H1 (cell line): ENCODE measurements at regions of chr15 and their contacts with region 1.

Region 1: DNA sequence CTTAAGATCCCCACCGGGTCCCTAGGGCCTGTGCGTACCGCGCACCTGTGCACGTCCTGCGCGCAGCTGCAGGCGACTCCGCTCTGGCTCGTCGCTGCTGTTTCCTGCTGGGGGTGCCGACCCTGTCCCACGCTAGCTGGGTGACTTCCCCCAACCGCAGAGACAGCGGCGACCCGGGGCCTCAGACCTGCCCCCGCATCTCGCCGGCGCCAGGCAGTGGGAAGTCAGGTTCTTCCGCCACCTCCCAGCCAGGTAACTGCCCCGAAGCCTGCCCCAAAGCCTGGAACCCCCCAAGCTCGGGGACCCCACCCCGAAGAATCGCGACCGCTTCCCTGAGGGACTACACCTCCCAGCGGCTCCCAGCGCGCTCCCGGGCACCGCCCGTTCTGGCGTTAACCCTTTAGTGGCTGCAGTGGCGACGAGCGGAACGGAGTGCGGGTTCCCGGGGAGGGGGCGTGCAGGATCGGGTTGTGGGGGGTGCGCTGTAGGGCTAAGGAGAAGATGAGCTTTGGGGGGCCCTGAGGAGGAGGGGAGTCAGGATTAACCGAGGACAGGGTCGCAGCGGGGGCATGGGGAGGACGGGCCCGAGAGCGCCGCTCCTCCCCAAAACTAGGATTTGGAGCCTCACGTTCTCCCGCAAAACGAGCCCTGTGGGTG is 511 bp downstream of the NEIL1 start:
- DNase-seq: peak in 1 of 2 experiments; percentile 87
- H3K4me3 ChIP-seq: peak overlapping the region; percentile 63 to 87 (median 76)
- H3K27ac ChIP-seq: no peak overlapping the region
- H3K4me1 ChIP-seq: peaks cover 0 to 9% (median 5%) of the 10 kb centered on the region in 4 experiments; a peak in 4 of 7 replicates
- H3K27me3 ChIP-seq: peaks cover 0 to 31% (median 16%) of the 10 kb centered on the region in 4 experiments; a peak in 5 of 7 replicates
- CTCF ChIP-seq: no peak
- EP300 ChIP-seq: no peak
- POLR2A ChIP-seq: no peak
- RAD21 ChIP-seq: no peak

Region 2: GRCh38 chr15:75130597-75131268 is 216.6 kb before region 1 on chr15:
- CTCF ChIA-PET with region 1: no interaction called
- POLR2A ChIA-PET with region 1: no interaction called
- DNase-seq: no peak
- H3K4me3 ChIP-seq: no peak overlapping the region
- H3K27ac ChIP-seq: no peak overlapping the region
- H3K4me1 ChIP-seq: no peaks in the 10 kb centered on the region
- H3K27me3 ChIP-seq: no peaks in the 10 kb centered on the region
- CTCF ChIP-seq: no peak
- EP300 ChIP-seq: no peak
- POLR2A ChIP-seq: no peak
- RAD21 ChIP-seq: no peak

Region 3: DNA sequence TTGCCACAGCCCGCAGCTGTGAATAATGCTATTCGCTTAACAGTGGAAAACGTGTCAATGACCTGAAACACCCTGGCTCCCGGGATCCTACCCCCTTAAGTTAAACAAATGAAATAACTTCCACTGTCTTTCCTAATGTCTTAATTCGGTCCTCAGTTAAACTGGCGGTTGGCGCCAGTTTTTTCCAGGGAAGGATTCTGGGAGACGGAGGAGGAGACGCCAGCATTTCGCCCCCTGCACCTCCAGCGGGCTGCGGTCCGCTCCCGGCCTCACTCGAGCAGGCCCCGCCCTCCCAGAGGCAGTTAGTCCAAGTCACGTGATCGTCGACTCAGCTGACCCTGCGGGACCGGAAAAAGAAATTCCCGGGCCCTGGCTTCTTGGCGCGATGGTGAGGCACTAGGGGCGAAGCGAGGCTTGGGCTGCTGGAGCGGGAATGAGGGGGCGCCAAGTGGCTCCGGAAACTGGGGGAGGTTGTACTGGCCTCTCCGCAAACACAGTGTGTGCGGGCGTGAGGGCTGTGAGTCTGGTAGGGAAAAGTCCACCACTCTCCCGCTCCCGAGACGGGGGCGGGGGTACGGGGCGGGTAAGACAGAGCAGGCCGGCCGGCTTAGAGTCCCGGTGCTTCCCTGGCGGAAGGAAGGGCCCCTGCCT is 11.5 kb before region 1 on chr15 and contains the start of gene COMMD4:
- CTCF ChIA-PET with region 1: interaction called, 3 read pairs
- POLR2A ChIA-PET with region 1: interaction called, 10 read pairs
- DNase-seq: peak; percentile 75 to 95
- H3K4me3 ChIP-seq: peak within 1 kb of the TSS; percentile 50 to 91 (median 86)
- H3K27ac ChIP-seq: peak within 1 kb of the TSS; percentile 75; the same call in 1 of the 2 replicates
- H3K4me1 ChIP-seq: peaks cover 0 to 7% (median 2%) of the 10 kb centered on the region in 4 experiments; a peak in 5 of 7 replicates
- H3K27me3 ChIP-seq: no peaks in the 10 kb centered on the region; a peak in 1 of 7 replicates
- CTCF ChIP-seq: no peak
- EP300 ChIP-seq: peak in 1 of 2 experiments; percentile 79; a peak in 1 of 3 replicates
- POLR2A ChIP-seq: peak; percentile 28 to 80
- RAD21 ChIP-seq: no peak
- total RNA-seq, gene COMMD4: 131 and 132 TPM in 2 replicates

Region 4: DNA sequence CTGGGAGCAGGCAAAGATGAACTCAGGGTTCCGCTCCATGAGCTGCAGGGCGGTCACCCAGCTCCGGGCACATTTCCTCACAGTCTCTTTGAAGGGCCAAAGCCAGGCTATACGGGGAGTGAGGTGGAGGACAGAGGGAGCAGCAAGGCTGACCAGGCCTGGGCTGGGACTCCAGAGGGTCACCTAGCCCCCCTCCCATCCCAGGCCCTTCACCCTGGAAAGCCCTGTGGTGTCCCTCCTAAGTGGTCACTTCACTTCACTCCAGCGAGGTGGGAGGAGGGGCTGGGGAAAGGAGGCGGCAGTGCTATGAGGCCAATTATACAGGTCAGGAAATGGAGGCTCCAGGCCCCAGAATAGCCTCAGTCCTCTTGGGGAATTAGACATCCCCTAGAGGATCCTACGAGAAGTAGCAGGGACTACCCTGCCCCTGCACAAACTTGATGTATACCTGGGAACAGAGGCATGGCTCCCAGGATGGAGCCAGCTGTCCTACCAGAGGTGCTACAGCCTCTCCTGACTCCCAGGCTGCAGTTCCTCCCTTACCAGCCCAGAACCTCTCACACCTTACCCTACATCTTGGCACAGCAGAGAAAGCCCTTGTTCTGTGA is 15.4 kb after region 1 on chr15:
- CTCF ChIA-PET with region 1: interaction called, 6 read pairs
- POLR2A ChIA-PET with region 1: interaction called, 69 read pairs
- DNase-seq: no peak
- H3K4me3 ChIP-seq: no peak overlapping the region
- H3K27ac ChIP-seq: no peak overlapping the region
- H3K4me1 ChIP-seq: peaks cover 0 to 4% (median 1%) of the 10 kb centered on the region in 4 experiments; a peak in 3 of 7 replicates
- H3K27me3 ChIP-seq: no peaks in the 10 kb centered on the region
- CTCF ChIP-seq: peak in 2 of 3 experiments; percentile 6 to 44; a peak in 2 of 4 replicates
- EP300 ChIP-seq: no peak
- POLR2A ChIP-seq: 0 out of 3 replicates have a peak, but pooled peaks of 1 of the 2 experiments have one; percentile 37
- RAD21 ChIP-seq: 0 out of 4 replicates have a peak, but pooled peaks of 1 of the 2 experiments have one; percentile 1

Region 5: DNA sequence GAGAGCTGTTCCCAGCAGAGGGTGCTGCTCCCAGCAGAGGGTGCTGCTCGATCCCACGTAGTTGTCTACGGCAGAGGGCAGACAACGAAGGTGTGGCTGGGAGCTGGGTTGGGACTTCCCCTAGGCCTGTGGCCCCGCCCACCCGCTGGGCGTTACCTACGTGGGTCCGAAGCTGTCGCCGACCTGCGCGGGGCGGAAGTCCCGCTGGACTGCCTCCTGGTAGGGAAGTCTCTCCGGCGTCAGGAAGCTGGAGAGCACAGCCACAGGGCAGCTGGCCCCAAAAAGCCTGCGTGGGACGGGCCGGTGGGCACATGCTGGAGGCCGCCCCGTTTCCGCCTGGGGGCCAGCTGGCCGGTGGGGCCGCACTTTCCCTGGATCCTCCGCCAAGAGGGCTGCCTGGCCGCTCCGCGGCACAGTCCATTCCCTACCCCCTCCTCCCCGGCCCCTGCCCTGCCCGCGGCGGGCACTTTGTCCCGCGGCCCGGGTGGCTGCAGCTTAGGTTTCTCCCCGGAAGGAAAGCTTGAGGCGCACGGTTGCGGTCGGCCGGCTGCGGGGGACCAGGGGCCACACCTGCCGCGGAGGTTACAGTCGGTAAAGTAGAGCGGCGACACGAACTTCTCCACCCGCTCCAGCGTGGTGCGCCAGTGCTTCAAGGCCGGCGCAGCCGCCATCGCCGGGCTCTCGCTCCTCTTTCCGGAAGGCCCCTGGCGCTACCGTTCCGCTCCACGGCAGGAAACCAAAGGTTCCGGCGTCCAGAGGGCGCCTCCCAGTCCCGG is 20.8 kb after region 1 on chr15 and contains the start of gene MAN2C1:
- CTCF ChIA-PET with region 1: interaction called, 6 read pairs
- POLR2A ChIA-PET with region 1: interaction called, 69 read pairs
- DNase-seq: peak; percentile 94 to 96
- H3K4me3 ChIP-seq: peak within 1 kb of the TSS; percentile 59 to 85 (median 72)
- H3K27ac ChIP-seq: peak within 1 kb of the TSS; percentile 74
- H3K4me1 ChIP-seq: peaks cover 0 to 4% (median 1%) of the 10 kb centered on the region in 4 experiments; a peak in 4 of 7 replicates
- H3K27me3 ChIP-seq: no peaks in the 10 kb centered on the region
- CTCF ChIP-seq: peak; percentile 91 to 96 (median 93)
- EP300 ChIP-seq: peak; percentile 9 to 76; a peak in 2 of 3 replicates
- POLR2A ChIP-seq: peak; percentile 95 to 96
- RAD21 ChIP-seq: peak; percentile 52 to 65
- total RNA-seq, gene MAN2C1: 79.1 and 88.9 TPM in 2 replicates

Region 6: DNA sequence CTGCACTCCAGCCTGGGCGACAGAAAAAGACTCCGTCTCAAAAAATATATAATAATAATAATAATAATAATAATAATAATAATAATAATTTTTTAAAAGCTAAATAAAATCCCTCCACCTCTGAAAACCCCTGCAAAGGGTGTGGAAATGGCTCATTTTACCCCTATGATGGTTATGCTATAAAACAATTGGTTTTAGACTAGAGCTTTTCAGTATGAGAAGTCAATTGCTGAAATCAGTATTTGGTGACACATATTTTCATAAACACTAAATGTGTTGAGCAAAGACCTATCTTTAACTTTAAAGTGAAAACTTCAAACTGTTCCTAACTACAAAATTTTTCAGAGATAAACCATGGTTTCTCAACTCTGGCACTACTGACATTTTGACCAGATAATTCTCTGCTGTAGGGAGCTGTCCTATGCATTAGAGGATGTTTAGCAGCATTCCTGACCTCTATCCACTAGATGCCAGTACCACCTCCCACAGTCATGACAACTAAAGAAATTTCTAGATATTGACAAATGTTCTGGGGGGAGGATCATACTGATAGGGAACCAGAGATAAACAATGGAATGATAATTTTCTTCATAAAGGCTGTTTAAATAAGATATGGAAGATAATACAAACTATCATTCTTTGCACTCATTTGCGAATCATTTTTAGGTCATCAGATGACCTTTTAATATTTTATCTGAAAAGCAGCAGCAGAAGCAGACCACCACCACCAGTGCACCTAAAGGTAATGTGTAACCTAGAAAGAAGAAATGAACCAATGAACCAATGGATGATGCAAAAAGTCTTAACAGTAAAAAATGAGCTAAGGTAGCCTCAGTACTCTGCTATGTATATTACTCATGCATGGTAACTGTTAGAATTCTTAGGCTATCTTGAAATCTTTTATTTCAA is 218.0 kb after region 1 on chr15:
- CTCF ChIA-PET with region 1: no interaction called
- POLR2A ChIA-PET with region 1: no interaction called
- DNase-seq: no peak
- H3K4me3 ChIP-seq: no peak overlapping the region
- H3K27ac ChIP-seq: no peak overlapping the region
- H3K4me1 ChIP-seq: peaks cover 0 to 2% (median 0%) of the 10 kb centered on the region in 4 experiments; a peak in 2 of 7 replicates
- H3K27me3 ChIP-seq: no peaks in the 10 kb centered on the region
- CTCF ChIP-seq: no peak
- EP300 ChIP-seq: no peak
- POLR2A ChIP-seq: no peak
- RAD21 ChIP-seq: peak in 1 of 2 experiments; percentile 11; a peak in 1 of 4 replicates